Activated B cell treated with CpG ODN at 0.5 μM for 24 hours (primary cell): ENCODE measurements at regions of chr2 and their contacts with region 1.

Region 1: GRCh38 chr2:73233154-73233931 is at the start of gene PRADC1:
- DNase-seq: peak; percentile 84
- ATAC-seq: peak; percentile 87
- H3K4me3 Mint-ChIP-seq: peak within 1 kb of the TSS; percentile 95
- H3K27ac Mint-ChIP-seq: peak within 1 kb of the TSS; percentile 93
- H3K4me1 Mint-ChIP-seq: peaks cover 38% of the 10 kb centered on the region
- H3K27me3 Mint-ChIP-seq: no peaks in the 10 kb centered on the region
- CTCF ChIP-seq: no peak
- total RNA-seq, gene PRADC1: 4.6 and 4.7 TPM in 2 replicates

Region 2: GRCh38 chr2:72572501-72572900 is 660.8 kb before region 1 on chr2:
- CTCF ChIA-PET with region 1: no interaction called
- POLR2A ChIA-PET with region 1: no interaction called
- intact Hi-C with region 1: no loop called
- DNase-seq: no peak
- ATAC-seq: no peak
- H3K4me3 Mint-ChIP-seq: no peak overlapping the region
- H3K27ac Mint-ChIP-seq: no peak overlapping the region
- H3K4me1 Mint-ChIP-seq: no peaks in the 10 kb centered on the region
- H3K27me3 Mint-ChIP-seq: no peaks in the 10 kb centered on the region
- CTCF ChIP-seq: no peak

Region 3: DNA sequence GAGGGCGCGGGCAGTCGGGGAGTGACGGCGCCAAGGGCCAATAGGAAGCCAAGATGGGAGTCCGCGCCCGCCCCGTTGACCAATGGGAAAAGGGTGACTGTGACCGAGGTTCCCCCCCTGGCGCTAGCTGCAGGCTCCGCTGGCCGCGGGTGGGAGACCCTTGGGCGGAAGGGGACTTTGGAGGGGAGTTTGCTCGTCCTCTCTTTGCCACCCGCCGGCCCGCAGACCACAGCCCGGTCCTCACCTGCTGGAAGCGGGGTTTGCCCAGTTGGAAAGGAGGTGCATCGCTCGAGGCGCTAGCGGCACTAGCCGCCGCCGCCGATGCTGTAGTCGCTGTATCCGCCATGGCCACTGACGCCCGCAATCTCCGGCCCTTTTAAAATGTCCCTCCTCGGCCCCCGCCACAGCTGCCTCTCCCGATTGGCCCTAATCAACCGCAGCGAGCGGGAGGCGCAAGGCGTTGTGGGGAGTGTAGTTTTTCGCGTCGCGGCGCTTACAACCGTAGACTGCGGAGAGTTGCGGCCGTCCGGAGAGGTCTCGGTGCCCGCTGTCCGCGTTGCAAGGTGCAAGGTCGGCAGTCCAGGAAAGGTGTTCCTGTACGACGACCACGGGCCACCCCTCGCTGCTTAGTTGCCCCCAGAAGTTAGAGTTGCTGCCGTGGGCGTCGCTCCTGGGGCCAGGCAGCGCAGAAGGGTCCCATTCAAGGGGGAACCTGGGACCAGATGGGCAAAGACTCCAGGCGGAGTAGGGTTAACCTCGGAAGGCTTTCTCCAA is 161.8 kb before region 1 on chr2 and contains the start of gene SFXN5:
- CTCF ChIA-PET with region 1: no interaction called
- POLR2A ChIA-PET with region 1: interaction called, 22 read pairs
- intact Hi-C with region 1: loop called (anchors 1 kb)
- DNase-seq: peak; percentile 99
- ATAC-seq: peak; percentile 89
- H3K4me3 Mint-ChIP-seq: peak within 1 kb of the TSS; percentile 90
- H3K27ac Mint-ChIP-seq: peak within 1 kb of the TSS; percentile 94
- H3K4me1 Mint-ChIP-seq: peaks cover 18% of the 10 kb centered on the region
- H3K27me3 Mint-ChIP-seq: no peaks in the 10 kb centered on the region
- CTCF ChIP-seq: no peak
- total RNA-seq, gene SFXN5: 10.2 and 13.9 TPM in 2 replicates

Region 4: GRCh38 chr2:73212448-73213176 is 20.7 kb before region 1 on chr2:
- CTCF ChIA-PET with region 1: interaction called, 23 read pairs
- POLR2A ChIA-PET with region 1: interaction called, 28 read pairs
- intact Hi-C with region 1: loop called (anchors 1 kb)
- DNase-seq: peak; percentile 64
- ATAC-seq: peak; percentile 60
- H3K4me3 Mint-ChIP-seq: peak overlapping the region; percentile 49
- H3K27ac Mint-ChIP-seq: no peak overlapping the region
- H3K4me1 Mint-ChIP-seq: peaks cover 32% of the 10 kb centered on the region
- H3K27me3 Mint-ChIP-seq: peaks cover 14% of the 10 kb centered on the region
- CTCF ChIP-seq: no peak

Region 5: GRCh38 chr2:73293534-73294171 is 60.3 kb after region 1 on chr2 and contains the start of gene EGR4:
- CTCF ChIA-PET with region 1: interaction called, 9 read pairs
- POLR2A ChIA-PET with region 1: interaction called, 16 read pairs
- intact Hi-C with region 1: no loop called
- DNase-seq: peak; percentile 68
- ATAC-seq: peak; percentile 87
- H3K4me3 Mint-ChIP-seq: peak within 1 kb of the TSS; percentile 77
- H3K27ac Mint-ChIP-seq: no peak within 1 kb of the TSS
- H3K4me1 Mint-ChIP-seq: peaks cover 28% of the 10 kb centered on the region
- H3K27me3 Mint-ChIP-seq: peaks cover 41% of the 10 kb centered on the region
- CTCF ChIP-seq: no peak
- total RNA-seq, gene EGR4: 0.20 TPM in 1 of 2 replicates, not detected in the other

Region 6: GRCh38 chr2:73926493-73927338 is 693.4 kb after region 1 on chr2 and contains the start of gene DGUOK:
- CTCF ChIA-PET with region 1: no interaction called
- POLR2A ChIA-PET with region 1: no interaction called
- intact Hi-C with region 1: loop called (anchors 5 kb)
- DNase-seq: peak; percentile 88
- ATAC-seq: peak; percentile 95
- H3K4me3 Mint-ChIP-seq: peak within 1 kb of the TSS; percentile 92
- H3K27ac Mint-ChIP-seq: peak within 1 kb of the TSS; percentile 93
- H3K4me1 Mint-ChIP-seq: peaks cover 60% of the 10 kb centered on the region
- H3K27me3 Mint-ChIP-seq: no peaks in the 10 kb centered on the region
- CTCF ChIP-seq: no peak
- total RNA-seq, gene DGUOK: 70.1 and 77.4 TPM in 2 replicates